Spleen (tissue), 13 donors: ENCODE measurements at regions of chr20 and their contacts with region 1.

Region 1: GRCh38 chr20:23366384-23366783 is 4.4 kb downstream of the GZF1 start:
- DNase-seq: no peak
- H3K4me3 ChIP-seq: no peak overlapping the region
- H3K27ac ChIP-seq: peak overlapping the region in 7 of 8 donors; percentile 13 to 76 (median 58)
- H3K4me1 ChIP-seq: peaks cover 27 to 59% (median 44%) of the 10 kb centered on the region in 6 donors
- H3K27me3 ChIP-seq: no peaks in the 10 kb centered on the region
- CTCF ChIP-seq: no peak
- POLR2A ChIP-seq: no peak

Region 2: GRCh38 chr20:23419995-23420901 is 53.9 kb after region 1 on chr20:
- intact Hi-C with region 1: loop called (anchors 5 kb)
- DNase-seq: peak; percentile 91
- H3K4me3 ChIP-seq: peak overlapping the region; percentile 67 to 96 (median 80)
- H3K27ac ChIP-seq: peak overlapping the region; percentile 69 to 93 (median 88)
- H3K4me1 ChIP-seq: peaks cover 3 to 61% (median 42%) of the 10 kb centered on the region in 6 donors
- H3K27me3 ChIP-seq: peaks cover 0 to 6% (median 0%) of the 10 kb centered on the region in 7 donors
- CTCF ChIP-seq: no peak
- POLR2A ChIP-seq: no peak

Region 3: GRCh38 chr20:23874747-23875146 is 508.4 kb after region 1 on chr20:
- intact Hi-C with region 1: no loop called
- DNase-seq: no peak
- H3K4me3 ChIP-seq: no peak overlapping the region
- H3K27ac ChIP-seq: no peak overlapping the region
- H3K4me1 ChIP-seq: no peaks in the 10 kb centered on the region
- H3K27me3 ChIP-seq: peaks cover 0 to 14% (median 0%) of the 10 kb centered on the region in 7 donors
- CTCF ChIP-seq: no peak
- POLR2A ChIP-seq: no peak